OCI-LY7 (cell line): ENCODE measurements at regions of chr1 and their contacts with region 1.

Region 1: DNA sequence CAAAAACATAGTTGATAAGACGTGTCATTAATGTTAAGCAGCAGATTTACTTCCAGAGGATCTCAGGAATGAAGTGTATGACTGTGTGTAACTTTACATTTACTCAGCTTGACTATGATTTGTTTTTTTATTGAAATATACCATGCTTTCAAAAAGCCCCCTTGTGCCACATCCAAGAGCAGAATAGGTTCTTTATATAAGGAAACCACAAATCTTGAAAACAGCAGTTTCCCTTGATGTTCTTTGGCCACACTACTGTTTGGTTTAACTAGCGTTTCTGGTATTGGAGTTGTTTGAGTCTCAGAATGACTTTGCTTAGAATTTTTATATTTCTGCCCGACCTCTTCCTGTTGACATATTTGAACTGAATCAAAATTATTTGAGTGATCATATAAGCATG is 25.0 kb downstream of the LRRC8C start:
- DNase-seq: peak; percentile 29
- H3K4me3 ChIP-seq: no peak overlapping the region
- H3K27ac ChIP-seq: no peak overlapping the region
- H3K4me1 ChIP-seq: peaks cover 43% of the 10 kb centered on the region
- CTCF ChIP-seq: no peak

Region 2: GRCh38 chr1:89381618-89382017 is 276.3 kb before region 1 on chr1:
- CTCF ChIA-PET with region 1: no interaction called
- POLR2A ChIA-PET with region 1: no interaction called
- intact Hi-C with region 1: no loop called
- DNase-seq: no peak
- H3K4me3 ChIP-seq: no peak overlapping the region
- H3K27ac ChIP-seq: no peak overlapping the region
- H3K4me1 ChIP-seq: no peaks in the 10 kb centered on the region
- CTCF ChIP-seq: no peak

Region 3: DNA sequence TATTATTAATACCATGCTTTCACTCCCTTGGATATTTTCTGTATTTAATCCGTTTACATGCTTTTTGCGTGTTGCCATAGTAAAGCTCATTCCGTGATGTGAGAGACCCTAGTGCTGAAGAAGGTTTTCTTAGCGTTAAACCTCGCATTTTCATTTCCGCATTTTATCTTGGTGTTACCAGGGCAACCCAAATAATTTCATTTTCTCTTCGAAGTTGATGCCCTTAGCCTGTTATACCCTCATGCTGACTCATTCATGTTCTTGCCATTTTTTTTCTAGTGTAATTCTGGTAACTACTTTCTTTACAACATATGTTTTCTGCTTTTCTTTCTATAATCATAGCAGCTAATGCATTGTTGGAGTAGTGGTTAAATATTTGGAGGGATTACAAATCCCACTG is 12.3 kb after region 1 on chr1:
- CTCF ChIA-PET with region 1: no interaction called
- POLR2A ChIA-PET with region 1: interaction called, 12 read pairs
- intact Hi-C with region 1: no loop called
- DNase-seq: peak; percentile 85
- H3K4me3 ChIP-seq: peak overlapping the region; percentile 46
- H3K27ac ChIP-seq: no peak overlapping the region
- H3K4me1 ChIP-seq: peaks cover 40% of the 10 kb centered on the region
- CTCF ChIP-seq: no peak